ENCODE measurements at regions of chr6 and their contacts with region 1.

Region 1: DNA sequence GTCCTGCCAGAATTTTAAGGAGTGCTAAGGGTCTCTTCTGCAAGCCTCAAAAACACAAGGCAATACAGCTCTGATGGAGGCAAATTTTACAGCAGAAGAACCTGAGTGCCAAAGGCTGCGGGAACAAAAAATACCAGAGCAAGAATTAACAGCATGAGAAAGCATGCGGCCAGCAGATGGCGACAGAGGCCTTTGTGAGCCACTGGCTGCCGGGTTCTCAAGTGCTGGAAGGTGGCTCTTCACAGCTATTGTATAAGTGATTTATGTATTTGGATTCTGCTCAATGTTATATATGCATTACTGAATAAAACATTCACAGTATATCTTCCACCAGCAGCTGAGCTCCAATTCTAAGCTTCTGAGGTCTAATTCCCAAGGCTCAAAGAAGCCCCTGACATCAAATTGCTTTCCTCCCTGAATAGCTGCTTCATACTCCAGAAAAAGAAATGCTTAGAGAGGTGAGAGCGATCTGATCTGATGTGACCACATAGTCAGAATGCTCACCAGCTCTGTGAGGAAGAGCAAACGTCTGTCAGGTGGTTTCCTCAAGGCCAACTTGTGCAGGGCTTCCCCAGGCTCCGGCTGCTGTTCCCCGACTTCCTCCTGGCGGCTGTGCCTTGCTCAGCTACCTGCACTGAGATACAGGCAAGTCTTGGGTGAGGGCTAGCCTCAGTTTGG is 58.6 kb downstream of the PPP1R3G start:
- DNase-seq: peak; percentile 80
- H3K4me3 Mint-ChIP-seq: no peak overlapping the region
- H3K27ac Mint-ChIP-seq: no peak overlapping the region
- H3K4me1 Mint-ChIP-seq: no peaks in the 10 kb centered on the region
- H3K27me3 Mint-ChIP-seq: no peaks in the 10 kb centered on the region
- CTCF ChIP-seq: peak; percentile 92

Region 2: GRCh38 chr6:5053038-5053437 is 90.7 kb before region 1 on chr6:
- CTCF ChIA-PET with region 1: interaction called, 4 read pairs
- POLR2A ChIA-PET with region 1: no interaction called
- intact Hi-C with region 1: loop called (anchors 1 kb)
- DNase-seq: no peak
- H3K4me3 Mint-ChIP-seq: no peak overlapping the region
- H3K27ac Mint-ChIP-seq: no peak overlapping the region
- H3K4me1 Mint-ChIP-seq: peaks cover 6% of the 10 kb centered on the region
- H3K27me3 Mint-ChIP-seq: no peaks in the 10 kb centered on the region
- CTCF ChIP-seq: no peak

Region 3: DNA sequence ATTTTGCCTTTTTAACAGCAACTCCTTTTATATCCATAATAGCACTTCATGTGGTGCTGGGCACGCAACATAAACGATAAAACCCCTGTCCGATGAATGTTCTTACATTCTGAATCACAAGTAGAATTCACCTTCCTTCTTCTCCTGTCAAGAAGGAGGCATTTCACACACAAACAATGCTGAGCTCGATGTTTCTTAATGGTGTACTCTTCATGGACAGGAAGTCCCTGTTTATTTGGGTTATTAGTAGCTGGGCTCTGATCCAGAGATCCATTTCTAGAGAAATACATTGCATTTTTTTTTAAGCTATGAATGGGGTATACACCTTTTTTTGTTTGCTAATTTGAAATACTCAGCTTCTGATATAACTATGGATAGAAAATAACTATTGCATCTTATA is 23.7 kb after region 1 on chr6:
- CTCF ChIA-PET with region 1: interaction called, 16 read pairs
- POLR2A ChIA-PET with region 1: no interaction called
- intact Hi-C with region 1: no loop called
- DNase-seq: no peak
- H3K4me3 Mint-ChIP-seq: no peak overlapping the region
- H3K27ac Mint-ChIP-seq: no peak overlapping the region
- H3K4me1 Mint-ChIP-seq: peaks cover 7% of the 10 kb centered on the region
- H3K27me3 Mint-ChIP-seq: no peaks in the 10 kb centered on the region
- CTCF ChIP-seq: no peak

Region 4: GRCh38 chr6:5278047-5278446 is 134.3 kb after region 1 on chr6:
- CTCF ChIA-PET with region 1: interaction called, 3 read pairs
- POLR2A ChIA-PET with region 1: no interaction called
- intact Hi-C with region 1: loop called (anchors 10 kb)
- DNase-seq: no peak
- H3K4me3 Mint-ChIP-seq: no peak overlapping the region
- H3K27ac Mint-ChIP-seq: no peak overlapping the region
- H3K4me1 Mint-ChIP-seq: peaks cover 4% of the 10 kb centered on the region
- H3K27me3 Mint-ChIP-seq: no peaks in the 10 kb centered on the region
- CTCF ChIP-seq: no peak

Region 5: GRCh38 chr6:5357486-5357885 is 213.7 kb after region 1 on chr6:
- CTCF ChIA-PET with region 1: no interaction called
- POLR2A ChIA-PET with region 1: no interaction called
- intact Hi-C with region 1: no loop called
- DNase-seq: no peak
- H3K4me3 Mint-ChIP-seq: no peak overlapping the region
- H3K27ac Mint-ChIP-seq: no peak overlapping the region
- H3K4me1 Mint-ChIP-seq: peaks cover 6% of the 10 kb centered on the region
- H3K27me3 Mint-ChIP-seq: no peaks in the 10 kb centered on the region
- CTCF ChIP-seq: no peak

Region 6: GRCh38 chr6:5379647-5380242 is 236.0 kb after region 1 on chr6:
- CTCF ChIA-PET with region 1: interaction called, 10 read pairs
- POLR2A ChIA-PET with region 1: no interaction called
- intact Hi-C with region 1: loop called (anchors 1 kb)
- DNase-seq: peak; percentile 63
- H3K4me3 Mint-ChIP-seq: no peak overlapping the region
- H3K27ac Mint-ChIP-seq: no peak overlapping the region
- H3K4me1 Mint-ChIP-seq: no peaks in the 10 kb centered on the region
- H3K27me3 Mint-ChIP-seq: no peaks in the 10 kb centered on the region
- CTCF ChIP-seq: peak; percentile 43

Region 7: GRCh38 chr6:5398530-5398929 is 254.8 kb after region 1 on chr6:
- CTCF ChIA-PET with region 1: no interaction called
- POLR2A ChIA-PET with region 1: no interaction called
- intact Hi-C with region 1: loop called (anchors 2 kb)
- DNase-seq: peak; percentile 59
- H3K4me3 Mint-ChIP-seq: no peak overlapping the region
- H3K27ac Mint-ChIP-seq: no peak overlapping the region
- H3K4me1 Mint-ChIP-seq: peaks cover 7% of the 10 kb centered on the region
- H3K27me3 Mint-ChIP-seq: no peaks in the 10 kb centered on the region
- CTCF ChIP-seq: peak; percentile 63